Activated CD8-positive, alpha-beta memory T cell treated with anti-CD3 and anti-CD28 coated beads, Interleukin-2, amount 10 ng/mL, durations not matched to agents 7 days and 5 days (primary cell): ENCODE measurements at regions of chr6 and their contacts with region 1.

Region 1: GRCh38 chr6:36027501-36028087 is at the start of gene MAPK14:
- DNase-seq: peak; percentile 99
- ATAC-seq: peak; percentile 92
- H3K4me3 Mint-ChIP-seq: peak within 1 kb of the TSS; percentile 93
- H3K27ac Mint-ChIP-seq: peak within 1 kb of the TSS; percentile 93
- H3K4me1 Mint-ChIP-seq: peaks cover 39% of the 10 kb centered on the region
- H3K27me3 Mint-ChIP-seq: peaks cover 25% of the 10 kb centered on the region
- total RNA-seq, gene MAPK14: 52.8 to 65.7 TPM

Region 2: DNA sequence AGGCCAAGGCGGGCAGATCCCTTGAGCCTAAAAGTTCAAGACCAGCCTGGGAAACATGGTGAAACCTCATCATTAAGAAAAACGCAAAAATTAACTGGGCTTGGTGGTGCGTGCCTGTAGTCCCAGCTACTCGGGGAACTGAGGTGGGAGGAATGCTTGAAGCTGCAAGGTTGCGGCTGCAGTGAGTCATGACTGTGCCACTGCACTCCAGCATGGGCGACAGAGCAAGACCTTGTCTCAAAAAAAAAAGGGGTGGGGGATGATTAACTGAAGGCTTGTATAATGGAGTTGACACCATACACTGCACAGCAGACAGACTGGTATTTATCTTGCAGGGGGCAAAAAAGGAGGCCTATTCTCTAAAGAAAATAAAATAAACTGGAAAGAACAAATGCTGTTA is 134.3 kb before region 1 on chr6:
- CTCF ChIA-PET with region 1: no interaction called
- DNase-seq: no peak
- ATAC-seq: no peak
- H3K4me3 Mint-ChIP-seq: no peak overlapping the region
- H3K27ac Mint-ChIP-seq: no peak overlapping the region
- H3K4me1 Mint-ChIP-seq: peaks cover 10% of the 10 kb centered on the region
- H3K27me3 Mint-ChIP-seq: no peaks in the 10 kb centered on the region

Region 3: GRCh38 chr6:36015666-36016065 is 11.9 kb before region 1 on chr6:
- CTCF ChIA-PET with region 1: interaction called, 11 read pairs
- DNase-seq: no peak
- ATAC-seq: no peak
- H3K4me3 Mint-ChIP-seq: no peak overlapping the region
- H3K27ac Mint-ChIP-seq: no peak overlapping the region
- H3K4me1 Mint-ChIP-seq: peaks cover 2% of the 10 kb centered on the region
- H3K27me3 Mint-ChIP-seq: peaks cover 27% of the 10 kb centered on the region

Region 4: GRCh38 chr6:36073587-36073986 is 46.0 kb after region 1 on chr6:
- CTCF ChIA-PET with region 1: interaction called, 11 read pairs
- DNase-seq: no peak
- ATAC-seq: no peak
- H3K4me3 Mint-ChIP-seq: no peak overlapping the region
- H3K27ac Mint-ChIP-seq: no peak overlapping the region
- H3K4me1 Mint-ChIP-seq: no peaks in the 10 kb centered on the region
- H3K27me3 Mint-ChIP-seq: no peaks in the 10 kb centered on the region

Region 5: DNA sequence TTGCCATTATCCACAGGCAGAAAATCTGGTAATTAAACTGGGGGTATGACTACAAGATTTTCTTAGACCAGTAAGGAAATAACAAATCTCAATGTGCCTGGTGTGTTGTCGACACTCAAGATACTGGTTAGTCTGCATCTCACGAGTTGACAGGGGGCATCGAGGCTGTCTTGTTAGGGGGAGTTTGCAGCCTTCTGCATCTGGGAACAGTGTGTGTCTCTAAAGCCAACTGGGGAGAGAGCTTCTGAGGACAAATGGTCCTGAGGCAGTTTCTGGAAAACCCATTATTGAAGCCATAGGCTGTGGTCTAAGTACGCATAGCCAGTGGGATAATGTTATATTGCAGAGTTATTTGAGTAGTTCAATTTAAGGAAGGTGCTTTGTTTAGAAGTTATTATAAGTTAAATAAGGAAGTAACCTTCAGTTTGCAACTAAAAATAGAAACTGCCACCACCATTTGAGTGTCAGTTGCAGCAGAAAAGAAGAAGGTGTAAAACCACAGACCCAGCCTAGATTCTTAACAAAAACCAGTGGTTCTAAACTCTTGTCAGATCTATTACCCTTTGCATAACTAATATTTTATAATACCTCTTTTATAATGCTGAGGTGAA is 87.3 kb after region 1 on chr6:
- CTCF ChIA-PET with region 1: interaction called, 10 read pairs
- DNase-seq: no peak
- ATAC-seq: peak; percentile 46
- H3K4me3 Mint-ChIP-seq: peak overlapping the region; percentile 38
- H3K27ac Mint-ChIP-seq: peak overlapping the region; percentile 96
- H3K4me1 Mint-ChIP-seq: peaks cover 70% of the 10 kb centered on the region
- H3K27me3 Mint-ChIP-seq: no peaks in the 10 kb centered on the region

Region 6: DNA sequence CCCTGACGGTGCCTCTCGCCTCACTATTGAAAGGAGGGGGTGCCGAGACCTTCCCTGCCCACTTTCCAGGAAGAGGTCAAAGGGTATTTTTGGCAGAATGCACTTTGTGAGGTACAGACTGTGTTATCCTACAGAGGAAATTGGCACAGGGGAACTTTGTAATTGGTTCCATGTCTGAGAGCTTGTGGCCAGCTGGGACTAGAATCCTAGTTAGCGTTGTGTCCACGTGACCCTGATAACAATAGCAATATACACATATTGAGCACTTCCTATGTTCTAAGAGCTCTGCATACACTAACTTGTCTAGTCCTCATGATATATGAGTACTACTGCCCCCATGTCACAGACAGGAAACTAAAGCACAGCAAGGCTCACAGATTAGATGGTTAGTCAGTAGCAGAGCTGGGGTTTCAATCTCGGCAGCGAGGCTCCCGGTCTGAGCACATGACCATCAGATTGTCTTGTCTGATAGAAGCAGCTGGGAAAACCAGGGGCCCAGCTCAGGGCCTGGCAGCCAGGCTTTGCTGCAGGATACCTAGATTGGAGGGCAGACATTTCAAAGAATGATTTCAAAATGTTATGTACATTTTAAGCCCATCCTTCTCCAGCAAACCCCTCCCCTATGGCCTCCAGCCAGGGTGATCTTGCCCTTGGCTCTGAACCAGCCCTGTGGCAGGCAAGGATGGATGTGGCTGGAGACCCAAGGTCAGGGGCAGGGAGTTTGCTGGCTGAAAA is 104.1 kb after region 1 on chr6:
- CTCF ChIA-PET with region 1: interaction called, 10 read pairs
- DNase-seq: peak; percentile 78
- ATAC-seq: peak; percentile 81
- H3K4me3 Mint-ChIP-seq: peak overlapping the region; percentile 78
- H3K27ac Mint-ChIP-seq: peak overlapping the region; percentile 91
- H3K4me1 Mint-ChIP-seq: peaks cover 42% of the 10 kb centered on the region
- H3K27me3 Mint-ChIP-seq: no peaks in the 10 kb centered on the region

Region 7: GRCh38 chr6:36340618-36341454 is 313.2 kb after region 1 on chr6:
- CTCF ChIA-PET with region 1: interaction called, 10 read pairs
- DNase-seq: peak; percentile 79
- ATAC-seq: peak; percentile 86
- H3K4me3 Mint-ChIP-seq: no peak overlapping the region
- H3K27ac Mint-ChIP-seq: no peak overlapping the region
- H3K4me1 Mint-ChIP-seq: peaks cover 22% of the 10 kb centered on the region
- H3K27me3 Mint-ChIP-seq: peaks cover 36% of the 10 kb centered on the region

Region 8: GRCh38 chr6:36380166-36380565 is 352.6 kb after region 1 on chr6:
- CTCF ChIA-PET with region 1: no interaction called
- DNase-seq: no peak
- ATAC-seq: no peak
- H3K4me3 Mint-ChIP-seq: no peak overlapping the region
- H3K27ac Mint-ChIP-seq: no peak overlapping the region
- H3K4me1 Mint-ChIP-seq: peaks cover 59% of the 10 kb centered on the region
- H3K27me3 Mint-ChIP-seq: no peaks in the 10 kb centered on the region